Activated naive CD4-positive, alpha-beta T cell treated with anti-CD3 and anti-CD28 coated beads for 36 hours (primary cell): ENCODE measurements at regions of chrX and their contacts with region 1.

Region 1: GRCh38 chrX:153470435-153471363 is at the start of gene HAUS7:
- DNase-seq: peak; percentile 93
- H3K4me3 Mint-ChIP-seq: peak within 1 kb of the TSS; percentile 78
- H3K27ac Mint-ChIP-seq: peak within 1 kb of the TSS; percentile 77
- H3K4me1 Mint-ChIP-seq: peaks cover 15% of the 10 kb centered on the region
- H3K27me3 Mint-ChIP-seq: no peaks in the 10 kb centered on the region
- total RNA-seq, gene HAUS7: 63.5 to 68.5 TPM

Region 2: DNA sequence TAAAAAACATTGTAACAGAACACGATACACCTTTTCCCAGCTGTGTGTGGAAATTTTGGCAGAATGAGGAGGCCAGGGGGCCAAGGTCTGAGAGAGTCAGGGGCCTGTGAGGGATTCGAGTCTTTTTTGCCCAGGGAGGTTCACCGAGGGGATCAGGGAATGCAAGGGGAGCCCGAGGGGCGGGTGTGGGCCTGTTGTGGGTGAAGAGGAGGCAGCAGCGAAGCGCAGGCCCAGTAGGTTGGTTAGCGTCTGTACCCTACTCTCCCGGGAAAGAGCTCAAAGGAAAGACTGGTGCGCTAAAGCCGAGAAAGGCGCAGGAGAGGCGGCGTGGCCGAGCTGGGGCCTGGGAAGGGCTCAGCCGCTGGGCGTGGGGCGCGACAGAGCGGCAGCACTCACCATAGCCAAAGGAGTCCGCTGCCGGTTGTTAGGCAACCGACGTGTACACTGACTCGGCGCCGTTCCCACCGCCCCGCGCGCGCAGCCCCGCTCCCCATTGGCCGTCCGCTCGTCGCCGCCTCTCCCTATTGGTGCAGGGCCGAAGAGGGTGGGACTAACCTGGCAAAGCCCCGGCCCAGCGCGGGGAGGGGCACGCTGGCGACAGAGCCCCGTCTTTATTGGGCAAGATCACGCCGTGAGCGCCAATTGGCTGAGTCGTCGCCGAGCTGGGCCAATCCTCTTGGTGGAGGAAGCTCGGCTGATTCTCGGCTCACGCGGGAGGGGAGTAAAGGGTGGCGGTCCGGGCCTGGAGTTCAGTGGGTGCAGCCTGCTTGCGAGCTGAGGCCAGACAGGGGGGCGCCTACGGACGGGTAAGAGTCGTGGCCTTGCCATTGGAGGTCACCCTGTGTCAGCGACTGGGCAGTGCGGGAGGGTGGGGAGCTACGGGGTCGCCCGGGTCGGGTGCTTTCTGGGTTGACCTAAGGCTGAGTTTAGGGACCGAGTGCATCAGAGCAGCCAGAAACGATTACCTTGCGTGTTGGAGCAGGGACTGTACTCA is 640.1 kb before region 1 on chrX and contains the starts of genes CETN2 and NSDHL:
- CTCF ChIA-PET with region 1: no interaction called
- intact Hi-C with region 1: loop called (anchors 1 kb)
- DNase-seq: peak; percentile 95
- H3K4me3 Mint-ChIP-seq: peak within 1 kb of the TSS; percentile 88
- H3K27ac Mint-ChIP-seq: peak within 1 kb of the TSS; percentile 81
- H3K4me1 Mint-ChIP-seq: peaks cover 26% of the 10 kb centered on the region
- H3K27me3 Mint-ChIP-seq: no peaks in the 10 kb centered on the region
- total RNA-seq, gene CETN2: 10.1 to 11.9 TPM
- total RNA-seq, gene NSDHL: 13.3 to 16.2 TPM

Region 3: DNA sequence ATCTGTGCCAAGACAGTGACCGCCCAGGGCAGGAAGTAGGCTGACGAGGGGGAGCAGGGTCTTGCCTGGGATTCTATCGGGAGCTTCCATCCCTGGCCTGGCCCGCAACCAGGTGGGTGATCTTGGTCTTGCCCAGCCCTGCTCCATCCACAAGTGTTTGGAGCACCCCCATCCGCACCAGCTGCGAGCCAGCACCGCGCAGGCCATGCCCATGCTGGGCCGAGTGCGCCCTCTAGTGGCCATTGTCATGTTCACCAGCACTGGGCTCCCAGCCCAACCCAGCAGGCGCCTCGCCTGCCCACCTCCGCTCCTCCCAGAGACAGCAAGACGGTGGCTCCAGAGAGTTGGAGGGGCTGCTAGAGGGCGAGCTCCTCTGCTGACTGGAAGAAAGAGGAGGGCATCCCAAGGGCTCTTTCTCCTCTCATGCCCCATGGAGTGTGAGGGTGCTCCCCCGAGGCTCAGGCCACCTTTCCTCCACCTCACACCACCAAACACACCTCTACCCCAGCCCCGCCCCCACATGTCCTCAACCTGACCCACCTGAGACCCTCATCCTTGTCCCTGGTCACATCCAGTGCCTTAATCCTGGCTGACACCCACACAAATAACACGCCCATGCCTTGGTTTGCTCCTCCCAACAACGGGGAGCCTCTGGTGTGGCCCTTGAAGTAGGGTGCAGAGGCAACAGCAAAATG is 36.9 kb after region 1 on chrX:
- CTCF ChIA-PET with region 1: interaction called, 61 read pairs
- intact Hi-C with region 1: loop called (anchors 1 kb)
- DNase-seq: peak; percentile 87
- H3K4me3 Mint-ChIP-seq: no peak overlapping the region
- H3K27ac Mint-ChIP-seq: no peak overlapping the region
- H3K4me1 Mint-ChIP-seq: peaks cover 1% of the 10 kb centered on the region
- H3K27me3 Mint-ChIP-seq: no peaks in the 10 kb centered on the region

Region 4: DNA sequence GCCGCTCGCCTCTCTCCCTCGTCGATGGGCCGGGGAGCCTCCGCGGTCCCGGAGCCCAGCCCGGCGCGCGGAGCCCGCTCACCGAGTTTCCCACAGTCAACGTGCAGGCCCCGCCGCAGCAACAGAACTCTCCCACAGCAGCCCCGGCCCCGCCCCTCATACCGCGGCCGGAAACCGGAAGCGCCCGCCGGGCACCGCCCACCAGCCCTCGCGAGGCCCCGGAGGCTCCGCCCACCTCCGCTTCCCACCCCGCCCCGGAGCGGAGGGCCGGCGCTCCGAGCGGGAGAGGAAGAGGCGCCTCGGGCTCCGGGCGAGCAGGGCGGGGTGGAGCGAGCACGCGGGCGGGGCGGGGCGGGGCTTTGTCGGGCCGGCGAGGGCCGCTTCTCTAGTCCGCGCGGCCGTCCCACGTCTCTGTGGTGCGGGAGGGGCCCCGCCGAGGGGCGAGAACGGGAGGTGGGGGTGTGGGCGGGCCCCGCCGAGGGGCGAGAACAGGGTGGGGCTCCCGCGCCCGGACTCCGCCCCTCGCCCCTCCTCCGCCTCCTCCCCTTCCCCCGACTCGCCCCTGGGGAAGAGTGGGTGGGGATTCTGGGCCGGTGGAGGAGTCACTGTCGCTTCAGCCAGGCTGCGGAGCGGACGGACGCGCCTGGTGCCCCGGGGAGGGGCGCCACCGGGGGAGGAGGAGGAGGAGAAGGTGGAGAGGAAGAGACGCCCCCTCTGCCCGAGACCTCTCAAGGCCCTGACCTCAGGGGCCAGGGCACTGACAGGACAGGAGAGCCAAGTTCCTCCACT is 253.7 kb after region 1 on chrX and contains the starts of genes ABCD1 and BCAP31:
- CTCF ChIA-PET with region 1: no interaction called
- intact Hi-C with region 1: no loop called
- DNase-seq: peak; percentile 88
- H3K4me3 Mint-ChIP-seq: peak within 1 kb of the TSS; percentile 85
- H3K27ac Mint-ChIP-seq: peak within 1 kb of the TSS; percentile 81
- H3K4me1 Mint-ChIP-seq: peaks cover 25% of the 10 kb centered on the region
- H3K27me3 Mint-ChIP-seq: no peaks in the 10 kb centered on the region
- total RNA-seq, gene ABCD1: 2.5 to 3.4 TPM
- total RNA-seq, gene BCAP31: 69.5 to 71.2 TPM